ENCODE measurements at regions of chr16 and their contacts with region 1.

Region 1: DNA sequence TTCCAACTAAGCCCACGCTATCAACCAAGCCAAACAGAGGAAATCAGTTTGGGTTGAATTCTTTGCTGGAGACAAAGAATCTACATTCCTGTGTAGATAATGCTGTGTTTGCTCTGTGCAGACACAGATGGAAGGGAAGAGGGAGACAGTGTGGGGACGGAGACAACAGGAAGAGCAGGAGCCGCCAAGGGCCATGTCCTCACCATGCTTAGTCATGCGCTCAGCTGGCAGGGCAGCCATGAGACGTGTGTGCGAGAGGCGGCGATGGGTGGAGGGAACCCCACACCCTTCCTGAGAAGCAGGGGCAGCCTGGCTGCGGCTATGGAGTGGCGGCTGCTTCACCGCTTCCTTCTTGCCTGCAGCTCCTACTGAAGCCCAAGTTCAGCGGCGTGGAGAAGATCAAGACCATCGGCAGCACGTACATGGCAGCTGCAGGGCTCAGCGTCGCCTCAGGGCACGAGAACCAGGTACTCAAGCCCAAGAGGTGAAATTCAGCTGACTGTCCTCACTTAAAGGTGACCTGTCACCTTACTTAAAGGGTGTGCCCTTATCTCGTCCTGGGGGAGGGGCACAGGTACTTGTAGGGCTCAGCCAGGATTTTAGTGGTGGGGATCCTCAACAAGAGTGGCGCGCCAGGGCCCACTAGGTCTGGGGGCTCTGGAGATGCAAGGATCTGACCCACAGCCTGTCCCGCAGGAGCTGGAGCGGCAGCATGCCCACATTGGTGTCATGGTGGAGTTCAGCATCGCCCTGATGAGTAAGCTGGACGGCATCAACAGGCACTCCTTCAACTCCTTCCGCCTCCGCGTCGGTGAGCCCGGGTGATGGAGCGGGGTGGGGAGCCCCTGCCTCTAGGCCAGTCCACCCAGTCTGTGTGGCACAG is 47.5 kb downstream of the ADCY7 start:
- DNase-seq: peak; percentile 27 to 31
- H3K4me3 ChIP-seq: no peak overlapping the region
- H3K27ac ChIP-seq: peak overlapping the region in 1 of 3 donors; percentile 28
- H3K4me1 ChIP-seq: no peaks in the 10 kb centered on the region
- H3K27me3 ChIP-seq: no peaks in the 10 kb centered on the region
- CTCF ChIP-seq: no peak
- POLR2A ChIP-seq: no peak

Region 2: GRCh38 chr16:50259334-50260205 is 54.3 kb before region 1 on chr16:
- intact Hi-C with region 1: loop called (anchors 10 kb)
- DNase-seq: peak; percentile 20
- H3K4me3 ChIP-seq: no peak overlapping the region
- H3K27ac ChIP-seq: no peak overlapping the region
- H3K4me1 ChIP-seq: peaks cover 0 to 6% of the 10 kb centered on the region in 2 donors
- H3K27me3 ChIP-seq: no peaks in the 10 kb centered on the region
- CTCF ChIP-seq: no peak
- POLR2A ChIP-seq: no peak